Mucosa of descending colon (tissue), 3 donors: ENCODE measurements at regions of chr5 and their contacts with region 1.

Region 1: DNA sequence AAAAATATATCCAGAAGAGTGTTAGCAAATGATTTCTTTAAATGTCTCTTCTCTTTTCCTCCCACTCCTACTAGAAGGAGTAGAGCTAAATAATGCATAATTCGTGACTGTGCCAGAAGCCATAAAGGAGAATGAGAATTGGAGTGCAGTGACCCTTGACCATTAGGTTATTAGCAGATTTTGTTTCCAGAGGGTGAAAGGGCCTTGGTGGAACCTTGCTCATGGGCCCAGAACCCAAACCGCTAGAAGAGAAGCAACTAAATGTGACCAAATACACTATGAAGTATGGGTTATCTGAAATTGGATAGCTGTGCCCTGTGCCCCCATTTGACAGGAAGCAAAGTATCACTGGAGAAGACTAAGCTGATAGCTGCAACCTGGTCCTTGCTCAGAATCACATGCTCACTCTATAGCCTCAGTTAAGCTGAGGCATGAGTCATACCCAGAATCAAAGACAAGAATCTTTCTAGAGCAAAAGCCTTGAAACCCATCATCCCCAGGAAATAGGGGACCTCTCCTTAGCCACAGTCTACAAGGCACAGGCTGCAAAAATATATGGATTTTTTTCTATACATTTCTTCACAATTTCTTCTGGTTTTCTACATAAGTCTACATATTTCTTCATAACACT is 36.3 kb downstream of the CAPSL start:
- DNase-seq: no peak
- ATAC-seq: peak; percentile 32
- H3K4me3 ChIP-seq: no peak overlapping the region
- H3K4me1 ChIP-seq: no peaks in the 10 kb centered on the region
- CTCF ChIP-seq: no peak

Region 2: DNA sequence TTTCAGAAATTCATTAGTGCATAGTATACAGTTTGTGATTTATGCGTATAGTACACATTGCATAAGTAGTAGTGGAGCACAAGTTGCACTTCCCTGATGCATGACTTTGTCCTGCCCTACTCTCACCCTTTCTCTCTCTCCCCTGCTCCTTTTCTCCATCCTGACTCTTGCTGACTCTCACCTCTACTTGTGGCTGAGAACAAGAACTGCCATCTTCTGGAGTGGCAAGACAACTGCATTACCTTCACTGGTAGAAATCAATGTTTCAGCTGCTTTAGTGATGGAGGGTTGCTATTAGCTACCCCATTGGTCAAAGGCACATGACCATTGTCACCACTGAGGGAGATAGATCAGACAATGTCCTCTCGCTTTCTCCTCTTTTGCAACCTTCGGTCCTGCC is 257.6 kb before region 1 on chr5:
- intact Hi-C with region 1: loop called in 1 of 2 experiments (anchors 10 kb)
- DNase-seq: no peak
- ATAC-seq: no peak
- H3K4me3 ChIP-seq: no peak overlapping the region
- H3K4me1 ChIP-seq: no peaks in the 10 kb centered on the region
- CTCF ChIP-seq: no peak